ENCODE measurements at regions of chr7 and their contacts with region 1.

Region 1: DNA sequence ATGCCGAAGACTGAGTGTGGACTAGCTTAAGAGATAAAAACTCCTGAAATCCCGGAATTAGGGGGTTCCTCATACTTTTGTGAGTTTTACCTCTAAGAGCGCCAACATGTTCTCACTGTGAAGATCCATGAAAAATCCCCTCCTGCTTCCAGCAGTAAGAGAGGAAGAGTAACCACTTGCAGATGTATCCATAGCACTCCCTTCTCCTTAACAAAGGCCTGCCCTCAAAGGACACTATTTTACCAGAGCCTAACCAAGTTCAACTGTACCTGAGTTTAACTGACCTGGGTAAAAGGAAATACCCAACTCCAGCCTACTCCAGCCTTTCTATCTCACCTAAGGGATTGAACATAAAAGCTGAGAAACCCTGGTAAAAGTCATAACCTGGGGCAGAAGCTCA is 280.9 kb downstream of the POLR1F start:
- DNase-seq: no peak
- H3K4me3 ChIP-seq: no peak overlapping the region
- H3K27ac ChIP-seq: no peak overlapping the region
- H3K4me1 ChIP-seq: peaks cover 0 to 9% (median 0%) of the 10 kb centered on the region in 4 experiments; a peak in 1 of 7 replicates
- H3K27me3 ChIP-seq: no peaks in the 10 kb centered on the region
- CTCF ChIP-seq: no peak
- EP300 ChIP-seq: no peak
- POLR2A ChIP-seq: no peak
- RAD21 ChIP-seq: no peak

Region 2: DNA sequence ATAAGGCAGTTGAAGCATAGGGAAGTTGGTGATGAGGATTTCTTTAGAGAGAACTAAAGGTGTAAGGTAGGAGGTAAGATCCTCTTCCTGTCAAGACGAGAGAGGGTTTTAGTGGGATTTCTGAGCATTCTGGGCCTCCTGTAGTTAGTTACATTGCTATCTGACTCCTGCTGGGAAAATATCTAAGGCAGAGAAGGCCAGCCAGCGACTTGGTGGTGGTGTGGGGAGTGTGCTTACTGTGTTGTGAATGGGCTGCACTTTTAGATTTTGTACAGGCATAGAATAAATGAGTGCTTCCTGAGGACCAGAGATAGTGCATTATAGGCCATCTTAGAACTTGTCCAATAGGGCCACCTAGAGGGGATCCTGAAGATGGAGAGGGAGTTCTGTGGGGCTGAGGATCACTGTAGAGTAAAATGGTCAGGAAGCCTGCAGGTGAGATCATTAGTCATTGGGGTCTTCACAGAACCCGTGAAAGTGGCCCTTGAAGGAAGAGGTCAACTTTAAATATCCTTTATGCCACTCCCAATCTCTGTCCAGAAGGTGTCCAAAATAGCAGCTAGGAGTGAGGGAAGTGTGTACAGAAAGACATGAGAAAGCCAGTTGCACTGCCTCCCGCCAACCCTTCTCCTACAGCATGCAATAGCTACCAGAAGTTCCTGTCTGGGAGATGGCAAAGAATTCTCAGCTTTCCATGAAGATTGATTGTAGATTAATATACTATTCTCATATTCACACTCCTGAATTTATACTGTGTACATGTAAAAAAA is 14.3 kb after region 1 on chr7:
- CTCF ChIA-PET with region 1: interaction called, 20 read pairs
- POLR2A ChIA-PET with region 1: no interaction called
- DNase-seq: peak in 1 of 2 experiments; percentile 23
- H3K4me3 ChIP-seq: no peak overlapping the region
- H3K27ac ChIP-seq: no peak overlapping the region
- H3K4me1 ChIP-seq: no peaks in the 10 kb centered on the region
- H3K27me3 ChIP-seq: no peaks in the 10 kb centered on the region
- CTCF ChIP-seq: peak in 2 of 3 experiments; percentile 69 to 70; a peak in 2 of 4 replicates
- EP300 ChIP-seq: no peak
- POLR2A ChIP-seq: no peak
- RAD21 ChIP-seq: peak; percentile 88 to 95

Region 3: DNA sequence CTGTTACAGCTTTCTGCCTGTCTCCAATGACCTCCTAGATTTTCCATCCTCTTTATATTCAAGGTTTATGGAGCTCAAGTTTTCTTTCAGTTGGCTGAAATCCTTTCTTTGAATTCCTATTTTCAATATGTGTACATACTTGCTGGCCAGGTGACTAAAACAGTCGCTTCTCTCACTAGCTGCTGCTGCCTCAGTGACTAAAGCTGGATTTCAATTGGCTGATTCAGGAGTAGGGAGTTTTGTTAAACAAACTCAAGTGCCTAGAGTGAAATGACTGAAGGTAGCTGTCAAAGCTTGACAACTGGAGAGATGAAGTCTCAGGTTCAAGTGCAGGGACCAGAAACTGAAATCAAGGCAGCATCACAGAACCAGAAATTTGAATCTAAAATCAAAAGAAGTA is 287.6 kb after region 1 on chr7:
- CTCF ChIA-PET with region 1: no interaction called
- POLR2A ChIA-PET with region 1: no interaction called
- DNase-seq: no peak
- H3K4me3 ChIP-seq: no peak overlapping the region
- H3K27ac ChIP-seq: no peak overlapping the region
- H3K4me1 ChIP-seq: no peaks in the 10 kb centered on the region
- H3K27me3 ChIP-seq: no peaks in the 10 kb centered on the region
- CTCF ChIP-seq: no peak
- EP300 ChIP-seq: no peak
- POLR2A ChIP-seq: no peak
- RAD21 ChIP-seq: no peak

Measured in H1 (cell line).